ENCODE measurements at regions of chr14 and their contacts with region 1.

Region 1: GRCh38 chr14:90399541-90400444 is 3.0 kb downstream of the CALM1 start:
- DNase-seq: peak; percentile 94 to 97 (median 95)
- H3K4me3 ChIP-seq: peak overlapping the region in 2 of 7 experiments; percentile 91 to 97
- H3K27ac ChIP-seq: no peak overlapping the region
- H3K4me1 ChIP-seq: peaks cover 18 to 54% (median 45%) of the 10 kb centered on the region in 4 experiments
- H3K27me3 ChIP-seq: no peaks in the 10 kb centered on the region

Region 2: DNA sequence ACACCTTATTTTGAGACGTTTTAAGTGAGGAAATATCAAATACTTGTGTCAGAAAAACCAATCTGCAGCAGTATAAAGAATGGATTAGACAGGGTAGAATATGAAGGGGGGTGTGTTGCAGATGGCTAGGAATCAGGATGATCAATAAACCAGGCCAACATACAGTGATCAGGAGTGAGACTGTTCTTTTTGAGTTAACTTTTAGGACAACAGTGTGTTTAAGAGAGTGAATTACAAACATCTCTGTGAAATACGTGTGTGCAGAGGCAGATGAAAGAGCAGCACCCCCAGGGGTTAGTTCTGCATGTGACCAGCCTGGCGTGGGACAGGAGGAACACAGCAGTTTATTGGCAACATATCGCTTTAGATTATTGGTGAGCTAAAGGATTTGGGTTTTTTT is 57.5 kb before region 1 on chr14:
- CTCF ChIA-PET with region 1: no interaction called
- POLR2A ChIA-PET with region 1: no interaction called
- DNase-seq: no peak
- H3K4me3 ChIP-seq: no peak overlapping the region
- H3K27ac ChIP-seq: no peak overlapping the region
- H3K4me1 ChIP-seq: no peaks in the 10 kb centered on the region
- H3K27me3 ChIP-seq: peaks cover 0 to 8% (median 1%) of the 10 kb centered on the region in 5 experiments

Region 3: GRCh38 chr14:90383075-90383730 is 16.6 kb before region 1 on chr14:
- CTCF ChIA-PET with region 1: interaction called, 12 read pairs
- POLR2A ChIA-PET with region 1: interaction called, 40 read pairs
- DNase-seq: peak; percentile 100
- H3K4me3 ChIP-seq: peak overlapping the region; percentile 56 to 98 (median 79)
- H3K27ac ChIP-seq: peak overlapping the region; percentile 99
- H3K4me1 ChIP-seq: peaks cover 15 to 32% (median 25%) of the 10 kb centered on the region in 4 experiments
- H3K27me3 ChIP-seq: no peaks in the 10 kb centered on the region

Region 4: GRCh38 chr14:90440021-90440451 is 40.2 kb after region 1 on chr14:
- CTCF ChIA-PET with region 1: no interaction called
- POLR2A ChIA-PET with region 1: no interaction called
- DNase-seq: no peak
- H3K4me3 ChIP-seq: no peak overlapping the region
- H3K27ac ChIP-seq: no peak overlapping the region
- H3K4me1 ChIP-seq: peaks cover 3 to 20% (median 15%) of the 10 kb centered on the region in 4 experiments
- H3K27me3 ChIP-seq: no peaks in the 10 kb centered on the region

Region 5: GRCh38 chr14:90518941-90519256 is 119.1 kb after region 1 on chr14:
- CTCF ChIA-PET with region 1: interaction called, 11 read pairs
- POLR2A ChIA-PET with region 1: interaction called, 5 read pairs
- DNase-seq: peak; percentile 31 to 70 (median 67)
- H3K4me3 ChIP-seq: no peak overlapping the region
- H3K27ac ChIP-seq: no peak overlapping the region
- H3K4me1 ChIP-seq: peaks cover 0 to 5% (median 1%) of the 10 kb centered on the region in 4 experiments
- H3K27me3 ChIP-seq: no peaks in the 10 kb centered on the region

Region 6: GRCh38 chr14:90599748-90600507 is 200.1 kb after region 1 on chr14:
- CTCF ChIA-PET with region 1: interaction called, 10 read pairs
- POLR2A ChIA-PET with region 1: interaction called, 3 read pairs
- DNase-seq: peak; percentile 51 to 83 (median 83)
- H3K4me3 ChIP-seq: no peak overlapping the region
- H3K27ac ChIP-seq: no peak overlapping the region
- H3K4me1 ChIP-seq: peaks cover 0 to 9% (median 8%) of the 10 kb centered on the region in 4 experiments
- H3K27me3 ChIP-seq: no peaks in the 10 kb centered on the region

Measured in common myeloid progenitor, CD34-positive (primary cell).